ENCODE measurements at regions of chr4 and their contacts with region 1.

Region 1: GRCh38 chr4:120922381-120923206 is at the start of gene PRDM5:
- DNase-seq: peak; percentile 70
- ATAC-seq: peak; percentile 85 to 86
- total RNA-seq, gene PRDM5: 8.2 to 14.2 TPM

Region 2: DNA sequence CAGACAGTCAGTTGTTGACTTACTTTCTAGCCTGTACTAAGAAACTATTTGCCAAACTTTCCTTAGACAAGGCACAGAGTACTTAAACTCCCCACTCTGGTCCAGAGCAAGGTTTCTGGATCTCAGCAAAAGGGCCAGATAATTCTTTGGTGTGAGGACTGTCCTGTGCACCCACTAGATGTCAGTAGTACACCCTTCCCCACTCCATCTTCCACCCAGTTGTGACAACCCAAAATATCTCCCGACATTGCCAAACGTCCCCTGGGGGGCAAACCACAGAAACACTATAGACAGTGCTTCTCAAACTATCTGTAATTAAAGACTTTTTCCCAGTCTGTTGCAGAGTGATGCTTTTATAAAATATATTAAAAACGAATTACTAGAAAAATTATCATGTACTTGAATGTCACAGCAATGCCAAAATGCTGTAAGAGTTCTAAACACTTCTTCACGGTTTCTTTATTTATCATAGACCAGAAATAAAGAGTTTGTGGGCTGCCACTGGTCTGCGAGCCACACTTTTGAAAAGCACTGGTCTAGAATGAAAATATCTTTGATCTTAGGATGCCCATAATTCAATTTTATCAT is 203.5 kb before region 1 on chr4:
- intact Hi-C with region 1: loop called in 1 of 2 experiments (anchors 10 kb)
- DNase-seq: peak; percentile 29
- ATAC-seq: peak; percentile 81 to 85

Region 3: GRCh38 chr4:120796271-120796670 is 126.3 kb before region 1 on chr4:
- intact Hi-C with region 1: no loop called
- DNase-seq: no peak
- ATAC-seq: no peak

Region 4: GRCh38 chr4:120902925-120903324 is 19.7 kb before region 1 on chr4:
- intact Hi-C with region 1: no loop called
- DNase-seq: no peak
- ATAC-seq: no peak

Region 5: GRCh38 chr4:121072224-121073003 is 149.8 kb after region 1 on chr4 and contains the start of gene NDNF:
- intact Hi-C with region 1: loop called in 1 of 2 experiments (anchors 10 kb)
- DNase-seq: peak; percentile 32
- ATAC-seq: peak; percentile 83 to 87
- total RNA-seq, gene NDNF: 4.2 to 5.4 TPM